ENCODE measurements at regions of chr5 and their contacts with region 1.

Region 1: GRCh38 chr5:149561848-149562247 is 10.6 kb upstream of the CSNK1A1 start:
- DNase-seq: no peak
- H3K4me3 Mint-ChIP-seq: no peak overlapping the region
- H3K27ac Mint-ChIP-seq: peak overlapping the region; percentile 44
- H3K4me1 Mint-ChIP-seq: peaks cover 23% of the 10 kb centered on the region
- H3K27me3 Mint-ChIP-seq: no peaks in the 10 kb centered on the region

Region 2: DNA sequence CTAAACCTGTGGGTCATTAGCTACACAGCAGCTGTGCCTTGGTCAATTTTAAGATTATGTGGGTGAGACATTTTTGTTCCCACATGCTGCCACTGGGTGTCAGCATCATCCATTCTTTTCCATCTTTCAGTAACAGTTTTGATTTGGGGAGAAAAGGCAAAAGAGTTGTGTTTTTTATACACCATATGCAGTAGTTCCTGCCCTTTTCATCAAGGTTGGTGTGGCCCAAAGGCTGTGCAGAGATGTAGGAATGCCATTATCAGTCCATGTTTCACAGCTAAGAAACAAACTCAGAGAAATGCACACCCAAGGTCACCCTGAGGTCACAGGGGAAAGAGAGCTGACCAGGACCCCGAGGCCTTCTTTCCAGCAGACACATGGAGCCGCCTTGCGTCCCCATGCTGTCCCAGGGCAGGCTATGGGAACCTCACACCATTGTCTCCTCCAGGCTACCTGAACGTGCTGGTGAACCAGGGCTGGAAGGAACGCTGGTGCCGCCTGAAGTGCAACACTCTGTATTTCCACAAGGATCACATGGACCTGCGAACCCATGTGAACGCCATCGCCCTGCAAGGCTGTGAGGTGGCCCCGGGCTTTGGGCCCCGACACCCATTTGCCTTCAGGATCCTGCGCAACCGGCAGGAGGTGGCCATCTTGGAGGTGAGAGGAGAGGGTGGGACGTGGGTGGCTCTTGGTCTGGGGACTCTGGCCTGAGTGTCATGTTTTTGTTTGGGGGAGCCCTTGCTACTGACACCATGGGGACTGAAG is 244.4 kb before region 1 on chr5:
- CTCF ChIA-PET with region 1: interaction called, 7 read pairs
- POLR2A ChIA-PET with region 1: no interaction called
- intact Hi-C with region 1: loop called (anchors 5 kb)
- DNase-seq: peak; percentile 50
- H3K4me3 Mint-ChIP-seq: no peak overlapping the region
- H3K27ac Mint-ChIP-seq: no peak overlapping the region
- H3K4me1 Mint-ChIP-seq: peaks cover 1% of the 10 kb centered on the region
- H3K27me3 Mint-ChIP-seq: no peaks in the 10 kb centered on the region

Region 3: GRCh38 chr5:149381987-149382340 is 179.9 kb before region 1 on chr5:
- CTCF ChIA-PET with region 1: interaction called, 65 read pairs
- POLR2A ChIA-PET with region 1: no interaction called
- intact Hi-C with region 1: loop called (anchors 1 kb)
- DNase-seq: peak; percentile 82
- H3K4me3 Mint-ChIP-seq: no peak overlapping the region
- H3K27ac Mint-ChIP-seq: no peak overlapping the region
- H3K4me1 Mint-ChIP-seq: no peaks in the 10 kb centered on the region
- H3K27me3 Mint-ChIP-seq: peaks cover 1% of the 10 kb centered on the region

Region 4: GRCh38 chr5:149434162-149435014 is 127.5 kb before region 1 on chr5:
- CTCF ChIA-PET with region 1: interaction called, 19 read pairs
- POLR2A ChIA-PET with region 1: no interaction called
- intact Hi-C with region 1: loop called (anchors 2 kb)
- DNase-seq: peak; percentile 66
- H3K4me3 Mint-ChIP-seq: no peak overlapping the region
- H3K27ac Mint-ChIP-seq: no peak overlapping the region
- H3K4me1 Mint-ChIP-seq: peaks cover 12% of the 10 kb centered on the region
- H3K27me3 Mint-ChIP-seq: no peaks in the 10 kb centered on the region

Region 5: GRCh38 chr5:149442563-149443182 is 119.2 kb before region 1 on chr5:
- CTCF ChIA-PET with region 1: interaction called, 38 read pairs
- POLR2A ChIA-PET with region 1: no interaction called
- intact Hi-C with region 1: loop called (anchors 1 kb)
- DNase-seq: peak; percentile 85
- H3K4me3 Mint-ChIP-seq: no peak overlapping the region
- H3K27ac Mint-ChIP-seq: no peak overlapping the region
- H3K4me1 Mint-ChIP-seq: peaks cover 23% of the 10 kb centered on the region
- H3K27me3 Mint-ChIP-seq: no peaks in the 10 kb centered on the region

Region 6: GRCh38 chr5:149497357-149497756 is 64.5 kb before region 1 on chr5:
- CTCF ChIA-PET with region 1: interaction called, 10 read pairs
- POLR2A ChIA-PET with region 1: no interaction called
- intact Hi-C with region 1: no loop called
- DNase-seq: no peak
- H3K4me3 Mint-ChIP-seq: no peak overlapping the region
- H3K27ac Mint-ChIP-seq: peak overlapping the region; percentile 26
- H3K4me1 Mint-ChIP-seq: no peaks in the 10 kb centered on the region
- H3K27me3 Mint-ChIP-seq: no peaks in the 10 kb centered on the region

Region 7: GRCh38 chr5:149618581-149619251 is 56.9 kb after region 1 on chr5:
- CTCF ChIA-PET with region 1: interaction called, 11 read pairs
- POLR2A ChIA-PET with region 1: no interaction called
- intact Hi-C with region 1: no loop called
- DNase-seq: peak; percentile 54
- H3K4me3 Mint-ChIP-seq: no peak overlapping the region
- H3K27ac Mint-ChIP-seq: no peak overlapping the region
- H3K4me1 Mint-ChIP-seq: peaks cover 12% of the 10 kb centered on the region
- H3K27me3 Mint-ChIP-seq: no peaks in the 10 kb centered on the region

Region 8: DNA sequence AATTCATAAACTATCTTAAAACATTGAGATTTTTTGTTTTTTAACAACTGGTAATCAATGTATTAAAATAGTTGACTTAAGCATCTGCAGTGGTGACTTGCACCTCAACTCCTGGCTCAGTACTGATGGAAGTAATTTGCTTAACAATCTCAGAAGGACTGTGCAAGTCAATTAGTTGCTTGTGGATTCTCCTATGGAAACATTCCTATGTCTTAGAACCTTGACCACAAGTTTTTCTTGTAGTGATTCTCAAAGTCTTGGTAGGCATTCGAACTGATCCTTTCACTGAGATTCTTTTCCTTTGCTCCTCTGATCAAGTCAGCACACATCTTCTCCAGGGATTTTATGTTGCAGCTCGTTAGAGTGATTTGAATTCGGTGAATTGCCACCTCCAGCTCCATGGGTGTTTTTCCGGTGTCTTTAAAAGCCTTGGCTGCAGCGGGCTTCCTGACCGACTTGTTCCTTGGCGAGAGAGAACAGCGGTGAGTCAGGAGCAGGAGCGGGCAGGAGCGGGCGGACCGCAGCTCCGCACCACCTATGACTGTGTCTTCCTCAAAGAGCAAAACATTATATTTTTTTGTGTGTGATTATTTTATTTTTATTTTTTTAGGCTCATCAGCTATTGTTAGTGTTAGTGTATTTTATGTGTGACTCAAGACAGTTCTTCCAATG is 459.8 kb after region 1 on chr5:
- CTCF ChIA-PET with region 1: no interaction called
- POLR2A ChIA-PET with region 1: no interaction called
- intact Hi-C with region 1: no loop called
- DNase-seq: no peak
- H3K4me3 Mint-ChIP-seq: no peak overlapping the region
- H3K27ac Mint-ChIP-seq: peak overlapping the region; percentile 38
- H3K4me1 Mint-ChIP-seq: peaks cover 16% of the 10 kb centered on the region
- H3K27me3 Mint-ChIP-seq: no peaks in the 10 kb centered on the region